ENCODE measurements at regions of chr22 and their contacts with region 1.

Region 1: DNA sequence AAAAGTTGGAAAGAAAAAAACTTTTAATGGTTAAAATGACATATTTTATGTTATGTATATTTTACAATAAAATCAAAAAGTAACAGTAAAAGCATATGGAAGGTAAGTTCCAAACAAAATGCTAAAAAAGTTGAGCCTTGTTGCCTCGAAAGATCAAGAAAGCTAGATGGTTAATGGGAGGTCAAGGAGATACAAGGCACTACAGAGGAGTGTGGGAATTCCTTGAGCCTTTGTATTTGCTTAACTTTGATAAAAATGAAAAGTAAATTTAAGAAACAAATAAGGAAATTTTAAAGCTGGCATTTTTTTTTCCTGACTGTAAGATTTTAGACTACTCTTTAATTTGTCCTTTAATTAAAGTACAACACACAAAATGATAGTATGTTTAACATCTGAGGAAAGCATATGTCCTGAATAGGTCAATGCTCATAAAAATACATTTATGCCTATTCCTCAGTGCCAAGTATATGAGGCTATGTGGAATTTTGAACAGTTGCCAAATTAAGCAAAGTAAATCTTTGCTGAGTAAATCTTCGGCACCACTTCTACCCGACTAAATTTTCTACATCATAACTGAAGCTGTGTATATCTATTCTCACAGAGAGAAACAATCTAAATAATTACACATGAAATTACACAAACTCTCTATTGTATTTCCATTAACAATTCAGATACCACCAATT is 108.8 kb downstream of the TTC28 start:
- DNase-seq: no peak
- H3K4me3 ChIP-seq: no peak overlapping the region
- H3K4me3 Mint-ChIP-seq: no peak overlapping the region
- H3K27ac Mint-ChIP-seq: no peak overlapping the region
- H3K4me1 ChIP-seq: no peaks in the 10 kb centered on the region
- H3K4me1 Mint-ChIP-seq: no peaks in the 10 kb centered on the region
- H3K27me3 ChIP-seq: no peaks in the 10 kb centered on the region
- H3K27me3 Mint-ChIP-seq: peaks cover 4% of the 10 kb centered on the region
- CTCF ChIP-seq: no peak

Region 2: DNA sequence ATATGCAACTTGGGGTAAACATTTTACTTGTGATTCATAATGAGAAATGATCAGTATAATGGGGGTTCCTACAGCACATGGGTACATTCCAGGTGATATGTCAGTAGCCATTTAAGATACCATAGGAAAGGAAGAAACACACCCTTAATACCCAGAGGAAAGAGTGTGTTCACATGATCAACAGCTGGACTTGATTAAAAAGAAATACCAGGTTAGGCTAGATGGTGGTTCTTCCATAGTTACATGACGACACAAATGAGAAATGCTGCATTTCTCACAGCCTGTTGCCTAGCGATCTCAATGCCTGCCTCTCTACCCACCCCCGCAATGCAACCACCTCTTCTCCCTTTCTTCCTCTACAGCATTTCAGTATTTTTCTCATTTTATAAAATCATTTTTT is 12.0 kb after region 1 on chr22:
- CTCF ChIA-PET with region 1: no interaction called
- POLR2A ChIA-PET with region 1: no interaction called
- intact Hi-C with region 1: no loop called
- DNase-seq: no peak
- H3K4me3 ChIP-seq: no peak overlapping the region
- H3K4me3 Mint-ChIP-seq: no peak overlapping the region
- H3K27ac Mint-ChIP-seq: no peak overlapping the region
- H3K4me1 ChIP-seq: no peaks in the 10 kb centered on the region
- H3K4me1 Mint-ChIP-seq: no peaks in the 10 kb centered on the region
- H3K27me3 ChIP-seq: no peaks in the 10 kb centered on the region
- H3K27me3 Mint-ChIP-seq: no peaks in the 10 kb centered on the region
- CTCF ChIP-seq: no peak

Region 3: DNA sequence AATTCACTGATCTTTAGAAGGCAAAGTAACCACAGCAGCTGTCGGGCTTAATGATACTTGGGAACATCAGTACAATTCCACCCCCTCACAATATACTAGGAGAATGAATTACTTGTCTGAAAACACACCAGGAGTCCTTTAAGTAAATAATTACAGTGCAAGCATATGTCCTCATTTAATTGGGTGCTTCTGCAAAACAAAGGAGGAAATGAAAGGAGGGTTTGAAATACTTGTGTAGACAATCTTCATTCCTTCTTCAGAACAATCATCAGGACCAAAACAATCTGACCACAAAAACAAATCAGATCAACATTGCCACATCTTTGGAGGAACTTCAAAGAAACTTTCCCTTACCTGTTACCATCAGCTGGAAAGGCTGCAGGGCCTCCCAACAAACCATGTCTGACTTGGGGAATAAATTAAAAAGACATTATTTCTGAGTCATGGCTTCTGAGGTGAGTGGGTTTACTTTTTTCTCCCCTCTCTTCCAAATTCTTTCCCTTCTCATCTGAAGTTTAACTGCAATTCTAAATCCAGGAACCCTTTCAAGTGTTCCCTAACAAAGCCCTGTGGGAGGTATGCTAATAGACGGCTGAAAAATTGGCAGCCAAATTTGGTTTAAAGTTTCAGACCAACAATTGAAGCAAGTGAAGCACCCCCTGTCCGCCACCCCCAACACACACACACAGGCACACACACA is 189.2 kb after region 1 on chr22:
- CTCF ChIA-PET with region 1: no interaction called
- POLR2A ChIA-PET with region 1: no interaction called
- intact Hi-C with region 1: no loop called
- DNase-seq: no peak
- H3K4me3 ChIP-seq: no peak overlapping the region
- H3K4me3 Mint-ChIP-seq: no peak overlapping the region
- H3K27ac Mint-ChIP-seq: no peak overlapping the region
- H3K4me1 ChIP-seq: peaks cover 3% of the 10 kb centered on the region; the same call in 1 of the 2 replicates
- H3K4me1 Mint-ChIP-seq: peaks cover 7% of the 10 kb centered on the region
- H3K27me3 ChIP-seq: no peaks in the 10 kb centered on the region
- H3K27me3 Mint-ChIP-seq: no peaks in the 10 kb centered on the region
- CTCF ChIP-seq: no peak

Region 4: GRCh38 chr22:29096736-29097669 is 526.2 kb after region 1 on chr22:
- CTCF ChIA-PET with region 1: interaction called, 12 read pairs
- POLR2A ChIA-PET with region 1: no interaction called
- intact Hi-C with region 1: no loop called
- DNase-seq: peak; percentile 39 to 54
- H3K4me3 ChIP-seq: no peak overlapping the region
- H3K4me3 Mint-ChIP-seq: peak overlapping the region; percentile 0
- H3K27ac Mint-ChIP-seq: peak overlapping the region; percentile 5
- H3K4me1 ChIP-seq: peaks cover 26% of the 10 kb centered on the region
- H3K4me1 Mint-ChIP-seq: peaks cover 16% of the 10 kb centered on the region
- H3K27me3 ChIP-seq: no peaks in the 10 kb centered on the region
- H3K27me3 Mint-ChIP-seq: no peaks in the 10 kb centered on the region
- CTCF ChIP-seq: no peak

Measured in Caco-2 (cell line).